ENCODE measurements at regions of chr6 and their contacts with region 1.

Region 1: DNA sequence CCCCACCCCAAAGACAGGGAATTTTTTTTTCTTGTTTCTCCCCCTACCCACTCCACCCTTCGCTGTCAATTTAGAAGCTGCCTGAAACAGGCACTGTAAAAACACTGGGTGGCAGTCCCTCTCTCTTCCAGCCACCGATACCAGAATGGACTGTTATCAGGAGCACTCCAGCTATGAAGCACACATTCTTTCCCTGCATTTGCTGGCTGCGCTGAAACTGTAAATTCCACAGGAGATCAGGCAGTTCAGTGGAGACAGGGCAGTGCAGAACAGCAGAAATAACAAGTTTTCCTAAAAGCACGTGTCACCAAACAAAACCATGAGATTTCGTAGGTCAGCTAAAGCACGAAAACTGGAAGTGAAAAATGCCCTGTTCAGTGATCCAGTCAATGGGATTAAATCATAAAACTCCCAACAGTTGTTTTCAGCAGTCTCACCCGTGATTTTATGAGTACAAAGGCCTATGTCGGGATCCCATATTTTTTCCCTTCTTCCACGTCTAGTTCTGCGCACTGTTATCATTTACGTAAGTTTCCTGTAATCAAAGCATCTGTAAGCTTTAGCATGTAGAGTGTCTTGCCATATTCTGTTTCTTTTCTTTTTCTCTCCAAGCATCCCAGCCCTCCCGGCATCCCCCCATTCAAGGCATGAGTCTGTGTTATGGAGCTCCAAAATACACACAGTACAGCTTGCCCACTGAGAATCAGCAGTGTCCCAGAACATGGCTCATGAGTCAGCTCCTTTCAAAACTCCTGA is 359.9 kb upstream of the EPHA7 start:
- DNase-seq: peak; percentile 11 to 31
- ATAC-seq: peak; percentile 88 to 99 (median 96)
- H3K4me3 ChIP-seq: peak overlapping the region in 5 of 10 donors; percentile 13 to 29 (median 24)
- H3K27ac ChIP-seq: peak overlapping the region in 7 of 10 donors; percentile 36 to 67 (median 52)
- H3K4me1 ChIP-seq: peaks cover 0 to 13% (median under 1%) of the 10 kb centered on the region in 9 donors
- H3K27me3 ChIP-seq: no peaks in the 10 kb centered on the region
- CTCF ChIP-seq: peak in 6 of 9 donors; percentile 30 to 63 (median 48)

Region 2: DNA sequence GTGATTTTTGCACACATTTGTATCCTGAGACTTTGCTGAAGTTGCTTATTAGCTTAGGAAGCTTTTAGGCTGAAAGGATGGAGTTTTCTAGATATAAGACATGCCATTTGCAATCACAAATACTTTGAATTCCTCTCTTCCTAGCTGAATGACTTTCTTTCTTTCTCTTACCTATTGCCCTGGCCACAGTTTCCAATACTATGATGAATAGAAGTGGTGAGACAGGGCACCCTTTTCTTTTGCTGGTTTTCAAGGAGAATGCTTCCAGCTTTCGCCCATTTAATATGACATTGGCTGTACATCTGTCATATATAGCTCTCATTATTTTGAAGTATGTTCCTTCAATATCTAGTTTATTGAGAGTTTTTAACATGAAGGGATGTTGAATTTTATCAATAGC is 49.7 kb after region 1 on chr6:
- intact Hi-C with region 1: no loop called
- DNase-seq: no peak
- ATAC-seq: no peak
- H3K4me3 ChIP-seq: no peak overlapping the region
- H3K27ac ChIP-seq: no peak overlapping the region
- H3K4me1 ChIP-seq: no peaks in the 10 kb centered on the region
- H3K27me3 ChIP-seq: no peaks in the 10 kb centered on the region
- CTCF ChIP-seq: no peak

Region 3: DNA sequence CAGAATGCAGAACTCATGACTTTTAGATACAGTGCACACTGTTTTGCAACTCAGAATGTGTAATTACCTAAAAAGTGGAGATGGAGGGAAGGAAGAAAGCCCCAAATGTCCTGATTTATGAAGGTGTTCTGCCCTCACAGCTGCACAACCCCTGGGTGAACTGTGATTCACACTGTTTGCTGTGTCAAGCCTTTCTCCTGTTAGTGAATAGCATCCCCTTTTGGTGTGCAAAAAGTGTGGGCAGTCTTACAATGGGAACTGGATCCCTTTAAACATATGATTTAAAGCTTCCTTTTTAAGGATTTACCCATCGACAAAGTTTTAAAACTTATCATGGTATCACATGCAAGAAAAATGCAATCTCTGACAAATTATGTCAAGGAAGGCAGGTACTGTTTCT is 273.5 kb after region 1 on chr6:
- intact Hi-C with region 1: loop called in 1 of 10 experiments (anchors 10 kb)
- DNase-seq: no peak
- ATAC-seq: no peak
- H3K4me3 ChIP-seq: no peak overlapping the region
- H3K27ac ChIP-seq: no peak overlapping the region
- H3K4me1 ChIP-seq: no peaks in the 10 kb centered on the region
- H3K27me3 ChIP-seq: no peaks in the 10 kb centered on the region
- CTCF ChIP-seq: peak in 3 of 9 donors; percentile 5 to 23 (median 9)

Measured in heart right ventricle (tissue), 16 donors.